Activated B cell treated with CpG ODN at 0.5 μM for 24 hours (primary cell): ENCODE measurements at regions of chr6 and their contacts with region 1.

Region 1: GRCh38 chr6:156901309-156902019 is 124.3 kb downstream of the ARID1B start:
- DNase-seq: no peak
- ATAC-seq: no peak
- H3K4me3 Mint-ChIP-seq: no peak overlapping the region
- H3K27ac Mint-ChIP-seq: no peak overlapping the region
- H3K4me1 Mint-ChIP-seq: peaks cover 37% of the 10 kb centered on the region
- H3K27me3 Mint-ChIP-seq: no peaks in the 10 kb centered on the region
- CTCF ChIP-seq: no peak

Region 2: GRCh38 chr6:156191895-156192294 is 709.6 kb before region 1 on chr6:
- CTCF ChIA-PET with region 1: no interaction called
- POLR2A ChIA-PET with region 1: no interaction called
- intact Hi-C with region 1: no loop called
- DNase-seq: no peak
- ATAC-seq: no peak
- H3K4me3 Mint-ChIP-seq: no peak overlapping the region
- H3K27ac Mint-ChIP-seq: no peak overlapping the region
- H3K4me1 Mint-ChIP-seq: peaks cover 14% of the 10 kb centered on the region
- H3K27me3 Mint-ChIP-seq: no peaks in the 10 kb centered on the region
- CTCF ChIP-seq: no peak

Region 3: GRCh38 chr6:156883497-156884252 is 17.8 kb before region 1 on chr6:
- CTCF ChIA-PET with region 1: no interaction called
- POLR2A ChIA-PET with region 1: no interaction called
- intact Hi-C with region 1: loop called (anchors 2 kb)
- DNase-seq: no peak
- ATAC-seq: peak; percentile 46
- H3K4me3 Mint-ChIP-seq: peak overlapping the region; percentile 44
- H3K27ac Mint-ChIP-seq: peak overlapping the region; percentile 43
- H3K4me1 Mint-ChIP-seq: peaks cover 86% of the 10 kb centered on the region
- H3K27me3 Mint-ChIP-seq: no peaks in the 10 kb centered on the region
- CTCF ChIP-seq: no peak

Region 4: DNA sequence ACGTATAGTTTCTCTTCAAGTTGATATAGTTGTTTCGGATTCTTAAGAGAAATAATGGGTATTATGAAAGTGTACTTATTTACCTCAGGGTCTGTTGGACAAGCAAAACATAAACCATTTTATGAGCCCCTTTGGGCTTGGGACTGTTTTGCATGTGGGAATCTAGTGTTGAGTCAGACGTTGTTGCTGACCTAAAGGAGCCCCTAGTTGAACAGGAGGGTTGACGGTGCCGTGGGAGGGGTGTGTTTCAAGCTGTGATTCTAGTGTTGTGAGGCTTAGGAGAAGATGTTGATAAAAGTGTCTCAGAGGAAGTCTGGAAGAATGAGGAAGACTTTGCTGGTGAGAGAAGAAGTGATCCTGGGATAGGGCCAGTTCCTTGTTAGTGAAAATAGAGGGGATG is 15.7 kb after region 1 on chr6:
- CTCF ChIA-PET with region 1: no interaction called
- POLR2A ChIA-PET with region 1: no interaction called
- intact Hi-C with region 1: loop called (anchors 2 kb)
- DNase-seq: no peak
- ATAC-seq: no peak
- H3K4me3 Mint-ChIP-seq: peak overlapping the region; percentile 51
- H3K27ac Mint-ChIP-seq: peak overlapping the region; percentile 54
- H3K4me1 Mint-ChIP-seq: peaks cover 70% of the 10 kb centered on the region
- H3K27me3 Mint-ChIP-seq: no peaks in the 10 kb centered on the region
- CTCF ChIP-seq: no peak